ENCODE measurements at regions of chr3 and their contacts with region 1.

Region 1: GRCh38 chr3:129942296-129942695 is 32.2 kb upstream of the TRH start:
- DNase-seq: peak; percentile 65
- ATAC-seq: peak; percentile 78
- H3K4me3 Mint-ChIP-seq: no peak overlapping the region
- H3K27ac Mint-ChIP-seq: no peak overlapping the region
- H3K4me1 Mint-ChIP-seq: no peaks in the 10 kb centered on the region
- H3K27me3 Mint-ChIP-seq: peaks cover 2% of the 10 kb centered on the region

Region 2: DNA sequence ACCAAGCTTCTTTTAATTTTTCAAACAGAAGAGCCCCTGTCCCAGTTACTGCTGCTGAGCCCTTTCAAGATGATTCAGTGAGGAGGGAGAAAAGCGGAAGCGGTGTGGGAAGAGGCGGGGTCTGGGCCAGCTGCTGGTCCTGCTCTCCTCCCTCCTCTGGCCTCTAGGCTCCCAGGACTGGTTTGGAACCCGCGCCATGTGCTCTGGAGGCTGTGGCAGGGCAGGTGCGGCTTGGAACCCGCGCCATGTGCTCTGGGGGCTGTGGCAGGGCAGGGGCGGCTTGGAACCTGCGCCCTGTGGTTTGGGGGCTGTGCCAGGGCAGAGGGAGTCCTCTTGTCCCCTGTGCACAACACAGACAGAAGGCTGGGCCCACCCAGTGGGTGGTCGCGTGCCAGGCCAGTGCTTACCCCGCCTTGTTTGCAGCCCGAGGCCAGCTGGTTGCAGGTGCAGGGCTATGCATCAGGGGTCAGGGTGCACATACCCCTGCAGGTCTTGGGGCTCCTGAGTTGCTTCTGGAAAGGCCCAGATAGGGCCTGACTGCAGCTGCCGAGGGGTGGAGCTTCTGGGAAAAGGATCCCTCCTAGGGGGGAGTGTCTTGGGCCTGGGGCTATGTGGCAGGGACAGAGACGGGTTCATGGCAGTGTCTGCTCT is 151.6 kb after region 1 on chr3:
- CTCF ChIA-PET with region 1: interaction called, 19 read pairs
- POLR2A ChIA-PET with region 1: no interaction called
- intact Hi-C with region 1: loop called (anchors 1 to 5 kb)
- DNase-seq: peak; percentile 56
- ATAC-seq: peak; percentile 39
- H3K4me3 Mint-ChIP-seq: peak overlapping the region; percentile 47
- H3K27ac Mint-ChIP-seq: peak overlapping the region; percentile 70
- H3K4me1 Mint-ChIP-seq: peaks cover 26% of the 10 kb centered on the region
- H3K27me3 Mint-ChIP-seq: no peaks in the 10 kb centered on the region